ENCODE measurements at regions of chr17 and their contacts with region 1.

Region 1: DNA sequence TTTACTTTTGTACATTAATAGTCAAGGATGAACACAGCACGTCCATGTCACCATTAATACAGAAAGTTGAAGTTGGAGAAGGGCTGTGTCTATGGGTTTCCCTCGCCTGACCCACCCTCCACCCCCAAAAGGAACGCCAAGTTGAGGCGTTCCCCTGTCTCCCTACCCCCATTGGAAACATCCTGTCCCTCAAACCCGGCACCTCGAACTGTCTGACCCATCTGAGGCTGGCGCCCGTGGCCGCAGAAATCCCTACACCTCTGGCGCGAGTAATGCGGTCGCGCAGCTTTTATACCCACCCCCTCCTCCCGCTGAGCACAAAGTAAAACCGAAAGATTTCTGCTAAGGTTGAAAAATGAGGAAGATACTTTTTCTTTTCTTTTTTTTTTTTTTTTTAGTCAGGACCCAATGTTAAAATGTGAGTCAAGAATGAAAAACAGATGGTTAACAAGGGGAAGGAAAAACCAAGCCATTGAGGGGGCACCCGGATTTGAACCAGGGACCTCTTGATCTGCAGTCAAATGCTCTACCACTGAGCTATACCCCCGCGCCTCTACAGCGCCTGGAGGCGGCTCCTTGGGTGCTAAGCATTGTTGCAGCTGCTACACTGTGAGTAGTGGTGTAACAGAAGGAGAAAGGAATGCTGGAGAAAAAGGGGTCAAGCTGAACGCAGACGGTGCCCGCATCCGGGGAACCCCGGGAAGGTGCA is 887 bp upstream of the LASP1 start:
- DNase-seq: peak; percentile 100
- H3K4me3 Mint-ChIP-seq: peak overlapping the region; percentile 95
- H3K27ac Mint-ChIP-seq: peak overlapping the region; percentile 97
- H3K4me1 Mint-ChIP-seq: peaks cover 51% of the 10 kb centered on the region
- H3K27me3 Mint-ChIP-seq: no peaks in the 10 kb centered on the region
- CTCF ChIP-seq: no peak

Region 2: GRCh38 chr17:38815576-38816193 is 53.3 kb before region 1 on chr17:
- CTCF ChIA-PET with region 1: interaction called, 12 read pairs
- intact Hi-C with region 1: no loop called
- DNase-seq: no peak
- H3K4me3 Mint-ChIP-seq: no peak overlapping the region
- H3K27ac Mint-ChIP-seq: no peak overlapping the region
- H3K4me1 Mint-ChIP-seq: no peaks in the 10 kb centered on the region
- H3K27me3 Mint-ChIP-seq: no peaks in the 10 kb centered on the region
- CTCF ChIP-seq: peak; percentile 55

Region 3: GRCh38 chr17:38853292-38854219 is 15.4 kb before region 1 on chr17 and contains the start of gene RPL23:
- CTCF ChIA-PET with region 1: interaction called, 27 read pairs
- intact Hi-C with region 1: loop called (anchors 2 kb)
- DNase-seq: peak; percentile 100
- H3K4me3 Mint-ChIP-seq: peak within 1 kb of the TSS; percentile 93
- H3K27ac Mint-ChIP-seq: peak within 1 kb of the TSS; percentile 100
- H3K4me1 Mint-ChIP-seq: peaks cover 60% of the 10 kb centered on the region
- H3K27me3 Mint-ChIP-seq: no peaks in the 10 kb centered on the region
- CTCF ChIP-seq: no peak
- total RNA-seq, gene RPL23: 3,443 and 3,829 TPM in 2 replicates

Region 4: GRCh38 chr17:38922538-38923297 is 53.7 kb after region 1 on chr17:
- CTCF ChIA-PET with region 1: interaction called, 10 read pairs
- intact Hi-C with region 1: no loop called
- DNase-seq: peak; percentile 68
- H3K4me3 Mint-ChIP-seq: no peak overlapping the region
- H3K27ac Mint-ChIP-seq: no peak overlapping the region
- H3K4me1 Mint-ChIP-seq: no peaks in the 10 kb centered on the region
- H3K27me3 Mint-ChIP-seq: no peaks in the 10 kb centered on the region
- CTCF ChIP-seq: no peak

Region 5: DNA sequence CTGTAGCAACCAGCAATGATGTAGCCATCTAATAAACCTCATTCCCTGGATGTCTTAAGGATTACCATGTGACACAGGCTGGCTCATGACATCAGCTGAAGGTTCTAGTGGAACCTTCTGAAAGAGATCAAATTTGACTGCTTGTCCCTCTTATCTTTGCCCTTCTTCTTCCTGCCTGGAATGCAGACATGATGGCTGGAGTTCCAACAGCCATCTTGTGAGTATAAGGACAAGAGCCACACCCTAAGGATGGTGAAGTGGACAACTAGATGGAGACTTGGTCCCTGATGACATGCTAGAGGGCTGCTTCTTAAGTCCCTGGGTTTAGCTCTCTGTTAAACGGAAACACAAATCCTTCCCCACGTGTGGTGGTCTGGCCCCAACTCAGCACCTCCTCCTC is 244.9 kb after region 1 on chr17:
- CTCF ChIA-PET with region 1: no interaction called
- intact Hi-C with region 1: no loop called
- DNase-seq: no peak
- H3K4me3 Mint-ChIP-seq: no peak overlapping the region
- H3K27ac Mint-ChIP-seq: no peak overlapping the region
- H3K4me1 Mint-ChIP-seq: peaks cover 15% of the 10 kb centered on the region
- H3K27me3 Mint-ChIP-seq: peaks cover 96% of the 10 kb centered on the region
- CTCF ChIP-seq: no peak

Region 6: GRCh38 chr17:39547713-39548478 is 678.9 kb after region 1 on chr17:
- CTCF ChIA-PET with region 1: no interaction called
- intact Hi-C with region 1: no loop called
- DNase-seq: peak; percentile 96
- H3K4me3 Mint-ChIP-seq: no peak overlapping the region
- H3K27ac Mint-ChIP-seq: no peak overlapping the region
- H3K4me1 Mint-ChIP-seq: peaks cover 12% of the 10 kb centered on the region
- H3K27me3 Mint-ChIP-seq: no peaks in the 10 kb centered on the region
- CTCF ChIP-seq: peak; percentile 100

Measured in Calu3 (cell line).